ENCODE measurements at regions of chr1 and their contacts with region 1.

Region 1: DNA sequence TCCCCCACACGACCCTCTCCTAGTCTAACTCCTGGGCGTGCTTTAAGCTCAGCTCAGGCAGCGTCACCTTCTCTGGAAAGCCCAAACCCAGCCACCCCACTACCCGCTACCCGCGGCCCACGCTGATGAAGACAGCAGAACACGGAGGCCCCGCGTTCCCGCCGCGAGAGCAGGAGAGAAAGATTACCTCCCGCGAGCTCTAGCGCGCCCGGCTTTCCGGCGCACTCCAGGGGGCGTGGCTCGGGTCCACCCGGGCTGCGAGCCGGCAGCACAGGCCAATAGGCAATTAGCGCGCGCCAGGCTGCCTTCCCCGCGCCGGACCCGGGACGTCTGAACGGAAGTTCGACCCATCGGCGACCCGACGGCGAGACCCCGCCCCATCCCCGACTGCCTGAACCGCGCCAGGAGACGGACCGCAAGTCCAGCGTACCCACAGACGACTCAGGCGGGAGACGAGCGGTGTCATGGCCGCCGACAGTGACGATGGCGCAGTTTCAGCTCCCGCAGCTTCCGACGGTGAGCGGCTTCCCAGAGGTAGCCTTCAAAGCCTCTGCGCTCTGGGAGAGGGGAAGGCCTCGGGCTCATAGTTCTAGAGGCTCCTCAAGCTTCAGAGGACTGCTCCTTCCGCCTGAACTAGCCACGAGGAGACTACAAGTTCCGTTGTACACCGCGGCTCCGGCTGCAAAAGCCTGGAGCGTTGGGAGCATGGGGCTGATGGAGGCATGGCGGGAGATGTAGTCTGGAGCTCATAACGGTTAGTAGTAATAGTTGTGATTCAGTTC is at the starts of genes MUTYH and TOE1:
- DNase-seq: peak; percentile 97
- ATAC-seq: peak; percentile 91
- H3K4me3 Mint-ChIP-seq: peak within 1 kb of the TSS; percentile 100
- H3K27ac Mint-ChIP-seq: peak within 1 kb of the TSS; percentile 100
- H3K4me1 Mint-ChIP-seq: peaks cover 53% of the 10 kb centered on the region
- H3K27me3 Mint-ChIP-seq: no peaks in the 10 kb centered on the region
- total RNA-seq, gene MUTYH: 59.8 to 61.8 TPM
- total RNA-seq, gene TOE1: 25.4 to 25.9 TPM

Region 2: GRCh38 chr1:45221716-45222115 is 118.3 kb before region 1 on chr1:
- CTCF ChIA-PET with region 1: no interaction called
- POLR2A ChIA-PET with region 1: no interaction called
- DNase-seq: no peak
- ATAC-seq: no peak
- H3K4me3 Mint-ChIP-seq: no peak overlapping the region
- H3K27ac Mint-ChIP-seq: no peak overlapping the region
- H3K4me1 Mint-ChIP-seq: no peaks in the 10 kb centered on the region
- H3K27me3 Mint-ChIP-seq: no peaks in the 10 kb centered on the region

Region 3: GRCh38 chr1:45303582-45304310 is 36.2 kb before region 1 on chr1:
- CTCF ChIA-PET with region 1: interaction called, 44 read pairs
- POLR2A ChIA-PET with region 1: interaction called, 60 read pairs
- DNase-seq: peak; percentile 99
- ATAC-seq: peak; percentile 89
- H3K4me3 Mint-ChIP-seq: peak overlapping the region; percentile 89
- H3K27ac Mint-ChIP-seq: peak overlapping the region; percentile 97
- H3K4me1 Mint-ChIP-seq: peaks cover 40% of the 10 kb centered on the region
- H3K27me3 Mint-ChIP-seq: no peaks in the 10 kb centered on the region

Region 4: DNA sequence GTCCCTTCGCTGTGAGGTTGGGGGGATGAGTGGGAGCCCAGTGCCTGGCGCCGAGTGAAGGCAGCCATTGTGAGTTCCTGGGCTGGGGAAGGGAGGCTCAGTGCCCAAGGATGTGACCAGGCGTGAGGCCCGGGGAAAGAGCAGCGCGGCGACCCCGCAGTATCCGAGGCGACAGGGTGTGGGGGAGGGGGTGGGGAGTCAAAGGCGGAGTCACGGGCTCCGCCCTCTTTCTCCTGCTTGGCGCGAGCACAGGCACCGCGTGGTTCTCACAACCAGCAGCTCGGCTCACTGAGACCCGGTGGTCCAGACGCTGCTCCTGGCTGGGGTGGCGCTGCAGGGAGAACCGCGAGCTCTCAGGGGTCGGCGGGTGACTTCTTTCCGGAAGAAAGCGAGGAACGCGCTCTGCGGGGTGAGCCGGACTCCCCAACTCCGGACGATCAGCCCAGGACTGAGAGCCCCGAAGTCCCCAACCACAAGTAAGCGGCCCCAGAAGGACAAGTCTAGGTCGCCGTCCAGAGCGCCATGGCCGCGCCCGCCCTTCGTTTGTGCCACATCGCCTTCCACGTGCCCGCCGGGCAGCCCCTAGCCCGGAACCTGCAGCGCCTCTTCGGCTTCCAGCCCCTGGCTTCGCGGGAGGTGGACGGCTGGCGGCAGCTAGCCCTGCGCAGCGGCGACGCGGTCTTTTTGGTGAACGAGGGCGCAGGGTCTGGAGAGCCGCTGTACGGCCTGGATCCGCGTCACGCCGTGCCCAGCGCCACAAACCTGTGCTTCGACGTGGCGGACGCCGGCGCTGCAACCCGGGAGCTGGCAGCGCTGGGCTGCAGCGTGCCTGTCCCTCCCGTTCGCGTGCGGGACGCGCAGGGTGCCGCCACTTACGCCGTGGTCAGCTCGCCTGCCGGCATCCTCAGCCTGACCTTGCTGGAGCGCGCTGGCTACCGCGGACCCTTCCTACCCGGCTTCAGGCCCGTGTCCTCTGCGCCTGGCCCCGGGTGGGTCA is 13.1 kb before region 1 on chr1 and contains the start of gene HPDL:
- CTCF ChIA-PET with region 1: interaction called, 24 read pairs
- POLR2A ChIA-PET with region 1: interaction called, 77 read pairs
- DNase-seq: peak; percentile 82
- ATAC-seq: peak; percentile 90
- H3K4me3 Mint-ChIP-seq: peak within 1 kb of the TSS; percentile 83
- H3K27ac Mint-ChIP-seq: peak within 1 kb of the TSS; percentile 87
- H3K4me1 Mint-ChIP-seq: peaks cover 22% of the 10 kb centered on the region
- H3K27me3 Mint-ChIP-seq: peaks cover 1% of the 10 kb centered on the region
- total RNA-seq, gene HPDL: 16.8 TPM

Region 5: GRCh38 chr1:45359882-45360513 is 20.0 kb after region 1 on chr1:
- CTCF ChIA-PET with region 1: interaction called, 15 read pairs
- POLR2A ChIA-PET with region 1: interaction called, 3 read pairs
- DNase-seq: peak; percentile 68
- ATAC-seq: peak; percentile 74
- H3K4me3 Mint-ChIP-seq: no peak overlapping the region
- H3K27ac Mint-ChIP-seq: no peak overlapping the region
- H3K4me1 Mint-ChIP-seq: peaks cover 6% of the 10 kb centered on the region
- H3K27me3 Mint-ChIP-seq: no peaks in the 10 kb centered on the region

Region 6: GRCh38 chr1:45375104-45376090 is 35.4 kb after region 1 on chr1:
- CTCF ChIA-PET with region 1: no interaction called
- POLR2A ChIA-PET with region 1: no interaction called
- DNase-seq: no peak
- ATAC-seq: no peak
- H3K4me3 Mint-ChIP-seq: no peak overlapping the region
- H3K27ac Mint-ChIP-seq: no peak overlapping the region
- H3K4me1 Mint-ChIP-seq: peaks cover 4% of the 10 kb centered on the region
- H3K27me3 Mint-ChIP-seq: no peaks in the 10 kb centered on the region

Region 7: GRCh38 chr1:45430490-45430889 is 90.5 kb after region 1 on chr1:
- CTCF ChIA-PET with region 1: no interaction called
- POLR2A ChIA-PET with region 1: no interaction called
- DNase-seq: no peak
- ATAC-seq: no peak
- H3K4me3 Mint-ChIP-seq: no peak overlapping the region
- H3K27ac Mint-ChIP-seq: no peak overlapping the region
- H3K4me1 Mint-ChIP-seq: no peaks in the 10 kb centered on the region
- H3K27me3 Mint-ChIP-seq: no peaks in the 10 kb centered on the region

Region 8: DNA sequence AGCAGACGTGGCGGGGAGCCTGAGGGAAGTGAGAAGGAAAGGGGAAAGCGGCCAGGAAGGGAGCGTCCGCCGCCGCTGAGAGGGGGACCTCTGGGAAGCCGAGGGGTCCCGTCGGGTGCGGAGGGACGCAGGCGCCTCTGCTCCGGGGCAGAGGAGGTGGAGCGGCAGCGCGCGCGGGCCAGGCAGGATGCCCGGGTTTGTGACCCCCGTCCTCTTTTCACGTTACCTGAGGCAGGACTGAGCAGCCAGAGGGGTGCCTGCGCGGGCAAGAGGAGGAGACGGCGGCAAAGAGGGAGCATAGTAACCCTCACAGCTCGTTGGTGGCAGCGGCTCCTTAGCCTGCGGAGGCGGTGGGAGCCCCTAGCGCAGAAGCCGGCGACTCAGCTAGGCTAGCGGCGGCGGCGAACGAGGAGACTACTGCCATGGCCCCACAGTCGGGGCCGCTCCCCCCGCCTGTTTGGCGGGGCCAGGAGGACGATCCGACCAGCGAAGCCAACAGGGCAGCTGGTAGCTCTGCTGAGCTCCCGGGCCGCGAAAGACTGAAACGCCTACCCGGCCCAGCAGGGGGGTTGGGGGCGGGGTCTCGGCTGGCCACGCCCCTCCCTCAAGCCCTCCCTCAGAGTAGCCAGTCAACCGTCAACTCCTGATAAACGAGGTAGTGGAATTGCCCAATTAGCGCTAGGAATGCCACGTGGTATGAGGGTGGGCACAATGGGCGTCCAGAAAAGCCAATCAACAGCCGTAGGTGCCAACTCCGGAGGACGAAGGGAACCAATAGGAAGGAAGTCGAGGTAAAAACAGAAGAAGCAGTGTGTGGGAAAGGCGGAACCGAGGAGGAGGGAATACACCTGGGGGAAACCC is 150.9 kb after region 1 on chr1 and contains the start of gene TESK2:
- CTCF ChIA-PET with region 1: interaction called, 60 read pairs
- POLR2A ChIA-PET with region 1: interaction called, 38 read pairs
- DNase-seq: peak; percentile 98
- ATAC-seq: peak; percentile 99
- H3K4me3 Mint-ChIP-seq: no peak within 1 kb of the TSS
- H3K27ac Mint-ChIP-seq: no peak within 1 kb of the TSS
- H3K4me1 Mint-ChIP-seq: peaks cover 12% of the 10 kb centered on the region
- H3K27me3 Mint-ChIP-seq: peaks cover 5% of the 10 kb centered on the region
- total RNA-seq, gene TESK2: 3.3 to 3.5 TPM

Region 9: GRCh38 chr1:45499415-45499769 is 159.4 kb after region 1 on chr1:
- CTCF ChIA-PET with region 1: interaction called, 4 read pairs
- POLR2A ChIA-PET with region 1: interaction called, 19 read pairs
- DNase-seq: no peak
- ATAC-seq: peak; percentile 7
- H3K4me3 Mint-ChIP-seq: peak overlapping the region; percentile 94
- H3K27ac Mint-ChIP-seq: peak overlapping the region; percentile 89
- H3K4me1 Mint-ChIP-seq: peaks cover 28% of the 10 kb centered on the region
- H3K27me3 Mint-ChIP-seq: no peaks in the 10 kb centered on the region

Measured in activated CD8-positive, alpha-beta T cell treated with anti-CD3 and anti-CD28 coated beads, Interleukin-2, amount 10 ng/mL, durations not matched to agents 7 days and 5 days (primary cell).